ENCODE measurements at regions of chr16 and their contacts with region 1.

Region 1: DNA sequence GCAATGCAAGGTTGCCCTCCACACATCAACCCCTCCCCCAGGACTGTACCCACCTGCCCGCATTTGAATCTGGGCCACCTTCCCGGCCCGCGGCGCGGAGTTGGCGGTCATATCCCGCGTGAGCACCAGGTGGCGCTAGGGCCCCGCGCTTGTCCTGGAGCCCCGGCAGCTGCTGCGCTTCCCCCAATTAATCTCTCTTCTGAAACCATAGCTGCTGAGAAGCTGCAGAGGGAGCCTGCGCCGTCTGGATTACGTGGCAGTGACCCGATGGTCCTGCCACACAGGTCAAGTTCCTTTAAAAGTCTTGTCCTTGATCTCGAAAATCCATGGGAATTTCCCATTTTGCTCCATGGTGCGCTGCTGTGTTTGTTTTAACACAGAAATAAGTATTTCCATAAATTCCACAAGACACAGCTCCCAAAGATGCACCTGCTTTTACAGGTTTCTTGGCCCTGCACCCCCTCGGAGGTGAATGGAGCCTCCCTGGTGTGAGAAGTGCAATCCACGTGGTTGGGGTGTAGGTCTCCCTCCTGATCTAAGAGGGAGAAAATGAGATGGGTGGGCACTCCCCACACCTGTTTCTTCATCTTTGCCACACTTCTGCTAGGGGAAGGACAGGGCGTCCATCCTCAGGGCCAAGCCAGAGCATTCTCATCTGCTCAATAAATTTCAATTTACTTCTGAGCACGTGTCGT is 22.1 kb downstream of the COX4I1 start:
- DNase-seq: peak; percentile 68 to 91 (median 78)
- ATAC-seq: peak; percentile 92
- H3K4me3 ChIP-seq: no peak overlapping the region
- H3K4me3 Mint-ChIP-seq: no peak overlapping the region
- H3K27ac ChIP-seq: no peak overlapping the region
- H3K27ac Mint-ChIP-seq: no peak overlapping the region
- H3K4me1 ChIP-seq: no peaks in the 10 kb centered on the region
- H3K4me1 Mint-ChIP-seq: peaks cover 6% of the 10 kb centered on the region
- H3K27me3 ChIP-seq: no peaks in the 10 kb centered on the region
- H3K27me3 Mint-ChIP-seq: no peaks in the 10 kb centered on the region
- CTCF ChIP-seq: peak; percentile 96

Region 2: DNA sequence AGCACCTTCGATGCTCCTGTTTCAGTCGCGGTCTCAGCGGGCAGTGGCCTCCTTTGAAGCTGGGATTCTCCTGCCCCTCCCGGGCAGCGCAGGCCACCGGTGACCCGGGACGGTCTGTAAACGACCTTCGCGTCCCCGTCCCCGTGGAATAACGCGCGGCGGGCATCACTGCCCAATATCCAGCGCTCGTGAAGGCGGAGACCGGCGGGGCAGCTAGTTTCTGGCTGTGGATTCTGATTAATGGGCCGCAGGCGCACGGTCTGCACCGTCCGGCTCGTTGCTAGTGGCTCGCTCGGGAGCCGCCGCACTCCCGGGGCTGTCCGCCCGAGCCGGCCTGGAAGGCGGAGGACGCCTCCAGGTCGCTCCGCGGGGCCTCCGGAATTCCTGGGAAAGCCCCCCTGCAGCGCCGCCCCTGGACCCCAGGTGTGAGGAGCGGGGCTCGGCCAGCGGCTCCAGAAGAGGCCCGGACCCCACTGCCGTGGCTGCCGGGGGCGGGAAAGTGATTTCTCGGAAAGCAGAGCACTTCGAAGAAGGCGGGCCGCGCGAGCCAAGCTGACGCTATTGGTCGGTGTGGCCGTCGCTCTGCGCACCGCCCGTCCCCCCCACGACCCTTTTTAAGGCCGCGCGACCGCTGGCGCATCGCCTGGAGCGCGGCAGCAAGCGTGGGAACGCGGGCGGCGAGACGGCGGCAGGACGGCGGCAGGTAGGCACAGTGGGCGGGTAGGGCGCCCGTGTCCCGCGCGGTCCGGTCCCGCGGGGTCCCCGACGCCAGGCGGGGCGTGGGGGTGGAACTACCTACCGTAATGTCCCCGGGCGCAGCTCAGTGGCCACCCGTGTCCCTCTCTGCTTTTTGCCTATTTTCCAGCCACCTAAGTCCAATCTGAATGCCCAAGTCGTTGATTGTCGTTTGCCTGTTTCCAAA is 77.2 kb after region 1 on chr16 and contains the start of gene IRF8:
- CTCF ChIA-PET with region 1: interaction called, 16 read pairs
- POLR2A ChIA-PET with region 1: no interaction called
- intact Hi-C with region 1: loop called (anchors 2 to 5 kb)
- DNase-seq: peak; percentile 35 to 89 (median 73)
- ATAC-seq: peak; percentile 77
- H3K4me3 ChIP-seq: peak within 1 kb of the TSS; percentile 54 to 66
- H3K4me3 Mint-ChIP-seq: peak within 1 kb of the TSS; percentile 83
- H3K27ac ChIP-seq: no peak within 1 kb of the TSS
- H3K27ac Mint-ChIP-seq: no peak within 1 kb of the TSS
- H3K4me1 ChIP-seq: peaks cover 35% of the 10 kb centered on the region
- H3K4me1 Mint-ChIP-seq: peaks cover 47% of the 10 kb centered on the region
- H3K27me3 ChIP-seq: peaks cover 0 to 2% of the 10 kb centered on the region in 2 experiments
- H3K27me3 Mint-ChIP-seq: no peaks in the 10 kb centered on the region
- CTCF ChIP-seq: no peak
- total RNA-seq, gene IRF8: 23.0 to 25.5 TPM

Region 3: GRCh38 chr16:85963753-85964285 is 142.2 kb after region 1 on chr16:
- CTCF ChIA-PET with region 1: interaction called, 15 read pairs
- POLR2A ChIA-PET with region 1: no interaction called
- intact Hi-C with region 1: no loop called
- DNase-seq: no peak
- ATAC-seq: no peak
- H3K4me3 ChIP-seq: no peak overlapping the region
- H3K4me3 Mint-ChIP-seq: no peak overlapping the region
- H3K27ac ChIP-seq: no peak overlapping the region
- H3K27ac Mint-ChIP-seq: no peak overlapping the region
- H3K4me1 ChIP-seq: no peaks in the 10 kb centered on the region
- H3K4me1 Mint-ChIP-seq: peaks cover under 1% of the 10 kb centered on the region
- H3K27me3 ChIP-seq: no peaks in the 10 kb centered on the region
- H3K27me3 Mint-ChIP-seq: no peaks in the 10 kb centered on the region
- CTCF ChIP-seq: no peak

Region 4: GRCh38 chr16:85986931-85987749 is 165.6 kb after region 1 on chr16:
- CTCF ChIA-PET with region 1: interaction called, 464 read pairs
- POLR2A ChIA-PET with region 1: interaction called, 6 read pairs
- intact Hi-C with region 1: loop called in 1 of 2 experiments (anchors 1 kb)
- DNase-seq: peak in 8 of 9 experiments; percentile 9 to 72 (median 43)
- ATAC-seq: no peak
- H3K4me3 ChIP-seq: no peak overlapping the region
- H3K4me3 Mint-ChIP-seq: no peak overlapping the region
- H3K27ac ChIP-seq: no peak overlapping the region
- H3K27ac Mint-ChIP-seq: no peak overlapping the region
- H3K4me1 ChIP-seq: no peaks in the 10 kb centered on the region
- H3K4me1 Mint-ChIP-seq: peaks cover 20% of the 10 kb centered on the region
- H3K27me3 ChIP-seq: no peaks in the 10 kb centered on the region
- H3K27me3 Mint-ChIP-seq: peaks cover 12% of the 10 kb centered on the region
- CTCF ChIP-seq: peak; percentile 66

Region 5: GRCh38 chr16:86002178-86002900 is 180.8 kb after region 1 on chr16:
- CTCF ChIA-PET with region 1: interaction called, 49 read pairs
- POLR2A ChIA-PET with region 1: no interaction called
- intact Hi-C with region 1: no loop called
- DNase-seq: no peak
- ATAC-seq: no peak
- H3K4me3 ChIP-seq: no peak overlapping the region
- H3K4me3 Mint-ChIP-seq: no peak overlapping the region
- H3K27ac ChIP-seq: no peak overlapping the region
- H3K27ac Mint-ChIP-seq: no peak overlapping the region
- H3K4me1 ChIP-seq: no peaks in the 10 kb centered on the region
- H3K4me1 Mint-ChIP-seq: peaks cover 7% of the 10 kb centered on the region
- H3K27me3 ChIP-seq: no peaks in the 10 kb centered on the region
- H3K27me3 Mint-ChIP-seq: no peaks in the 10 kb centered on the region
- CTCF ChIP-seq: no peak

Region 6: DNA sequence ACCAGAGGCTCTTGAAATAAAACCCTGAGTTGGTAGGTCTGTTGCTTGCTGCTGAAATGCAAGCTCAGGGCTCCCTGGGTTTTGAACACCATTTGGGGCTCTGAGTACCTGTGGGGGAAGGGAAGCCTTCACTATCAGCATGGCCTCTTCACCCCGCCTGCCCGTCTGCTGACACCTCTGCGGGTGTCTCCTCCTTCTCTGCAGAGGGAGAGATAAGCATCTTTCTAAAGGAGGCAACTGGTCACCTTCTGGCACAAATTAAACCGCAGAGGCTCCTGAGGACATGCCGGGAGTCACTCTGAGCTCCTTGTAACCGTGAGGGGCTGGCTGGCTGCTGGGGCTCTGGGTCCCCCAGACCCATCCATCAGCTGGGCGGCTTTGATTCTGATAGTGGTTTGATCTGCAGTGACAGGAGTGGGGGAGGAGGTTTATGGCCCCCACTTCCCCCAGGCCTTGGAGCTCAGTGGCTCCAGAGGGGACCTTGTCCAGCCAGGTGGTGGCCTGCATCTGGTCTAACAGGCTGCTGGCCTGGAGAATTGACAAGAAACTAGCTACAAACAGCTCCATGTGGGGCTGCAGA is 200.9 kb after region 1 on chr16:
- CTCF ChIA-PET with region 1: interaction called, 126 read pairs
- POLR2A ChIA-PET with region 1: no interaction called
- intact Hi-C with region 1: no loop called
- DNase-seq: no peak
- ATAC-seq: no peak
- H3K4me3 ChIP-seq: no peak overlapping the region
- H3K4me3 Mint-ChIP-seq: no peak overlapping the region
- H3K27ac ChIP-seq: no peak overlapping the region
- H3K27ac Mint-ChIP-seq: no peak overlapping the region
- H3K4me1 ChIP-seq: no peaks in the 10 kb centered on the region
- H3K4me1 Mint-ChIP-seq: no peaks in the 10 kb centered on the region
- H3K27me3 ChIP-seq: peaks cover 0 to 5% of the 10 kb centered on the region in 2 experiments
- H3K27me3 Mint-ChIP-seq: peaks cover 33% of the 10 kb centered on the region
- CTCF ChIP-seq: no peak

Region 7: GRCh38 chr16:86519649-86520316 is 698.2 kb after region 1 on chr16:
- CTCF ChIA-PET with region 1: interaction called, 3 read pairs
- POLR2A ChIA-PET with region 1: no interaction called
- intact Hi-C with region 1: loop called in 1 of 2 experiments (anchors 1 kb)
- DNase-seq: peak; percentile 16 to 74 (median 54)
- ATAC-seq: no peak
- H3K4me3 ChIP-seq: no peak overlapping the region
- H3K4me3 Mint-ChIP-seq: no peak overlapping the region
- H3K27ac ChIP-seq: no peak overlapping the region
- H3K27ac Mint-ChIP-seq: no peak overlapping the region
- H3K4me1 ChIP-seq: peaks cover 8% of the 10 kb centered on the region
- H3K4me1 Mint-ChIP-seq: peaks cover 3% of the 10 kb centered on the region
- H3K27me3 ChIP-seq: peaks cover 0 to 10% of the 10 kb centered on the region in 2 experiments
- H3K27me3 Mint-ChIP-seq: peaks cover 46% of the 10 kb centered on the region
- CTCF ChIP-seq: peak; percentile 78